Gastrocnemius medialis (tissue), 4 donors: ENCODE measurements at regions of chr3 and their contacts with region 1.

Region 1: DNA sequence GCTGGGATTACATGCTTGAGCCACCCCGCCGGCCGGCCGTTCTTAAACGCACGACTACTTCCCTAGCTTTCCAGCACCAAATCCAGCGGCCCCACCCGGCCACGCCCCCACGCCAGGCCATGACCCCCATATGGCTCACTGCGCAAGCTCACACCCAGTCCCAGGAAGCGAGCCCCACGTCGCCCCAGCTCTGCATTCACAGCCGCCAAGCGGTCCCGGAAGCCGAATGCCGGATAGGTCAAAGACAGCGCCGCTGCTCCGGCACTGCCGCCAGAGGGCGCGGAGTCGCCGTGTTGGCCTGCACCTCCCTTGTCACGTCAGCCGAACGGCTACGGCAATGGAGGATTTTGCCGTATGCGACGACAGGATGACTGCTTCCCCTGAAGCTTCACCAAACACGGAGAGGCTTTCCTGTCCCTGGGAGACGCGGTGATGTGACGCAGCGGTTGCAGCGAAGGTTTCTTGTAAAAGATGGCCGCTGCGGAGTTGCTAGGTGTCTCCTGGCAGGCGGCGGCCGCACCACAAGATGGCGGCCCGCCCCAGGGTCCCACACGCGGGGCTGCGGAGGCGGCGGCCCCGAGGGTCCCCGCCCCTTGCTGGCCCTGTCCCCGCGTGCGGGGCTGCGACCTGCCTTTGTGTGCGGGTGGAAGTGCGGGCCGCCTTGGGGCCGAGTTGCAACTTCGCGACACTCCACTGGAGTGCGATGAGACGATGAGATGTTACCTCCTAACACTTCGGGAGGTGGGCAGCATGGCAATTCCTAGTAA is 30.2 kb upstream of the RPN1 start:
- DNase-seq: peak; percentile 97 to 99
- ATAC-seq: peak; percentile 95
- H3K4me3 ChIP-seq: peak overlapping the region; percentile 67 to 77 (median 70)
- H3K27ac ChIP-seq: peak overlapping the region; percentile 82 to 95 (median 90)
- H3K4me1 ChIP-seq: peaks cover 0 to 8% of the 10 kb centered on the region in 2 donors
- H3K27me3 ChIP-seq: no peaks in the 10 kb centered on the region
- CTCF ChIP-seq: peak; percentile 99 to 100 (median 99)
- POLR2A ChIP-seq: peak; percentile 73 to 85

Region 2: GRCh38 chr3:128617557-128618397 is 63.0 kb before region 1 on chr3:
- in situ Hi-C with region 1: no loop called
- intact Hi-C with region 1: loop called (anchors 2 kb)
- DNase-seq: peak; percentile 95 to 97
- ATAC-seq: peak; percentile 90 to 96
- H3K4me3 ChIP-seq: peak overlapping the region; percentile 73 to 96 (median 84)
- H3K27ac ChIP-seq: peak overlapping the region; percentile 85 to 95 (median 90)
- H3K4me1 ChIP-seq: peaks cover 19 to 20% of the 10 kb centered on the region in 2 donors
- H3K27me3 ChIP-seq: no peaks in the 10 kb centered on the region
- CTCF ChIP-seq: peak; percentile 94 to 99 (median 95)
- POLR2A ChIP-seq: peak in 1 of 2 donors; percentile 39

Region 3: GRCh38 chr3:128650096-128651050 is 30.4 kb before region 1 on chr3 and contains the start of gene RPN1:
- in situ Hi-C with region 1: no loop called
- intact Hi-C with region 1: loop called (anchors 1 kb)
- DNase-seq: peak; percentile 97 to 98
- ATAC-seq: peak; percentile 96
- H3K4me3 ChIP-seq: peak within 1 kb of the TSS; percentile 90 to 100 (median 95)
- H3K27ac ChIP-seq: peak within 1 kb of the TSS; percentile 97 to 100 (median 100)
- H3K4me1 ChIP-seq: peaks cover 16 to 17% of the 10 kb centered on the region in 2 donors
- H3K27me3 ChIP-seq: no peaks in the 10 kb centered on the region
- CTCF ChIP-seq: no peak
- POLR2A ChIP-seq: peak; percentile 77 to 87
- total RNA-seq, gene RPN1: 197 to 219 (median 212) TPM

Region 4: DNA sequence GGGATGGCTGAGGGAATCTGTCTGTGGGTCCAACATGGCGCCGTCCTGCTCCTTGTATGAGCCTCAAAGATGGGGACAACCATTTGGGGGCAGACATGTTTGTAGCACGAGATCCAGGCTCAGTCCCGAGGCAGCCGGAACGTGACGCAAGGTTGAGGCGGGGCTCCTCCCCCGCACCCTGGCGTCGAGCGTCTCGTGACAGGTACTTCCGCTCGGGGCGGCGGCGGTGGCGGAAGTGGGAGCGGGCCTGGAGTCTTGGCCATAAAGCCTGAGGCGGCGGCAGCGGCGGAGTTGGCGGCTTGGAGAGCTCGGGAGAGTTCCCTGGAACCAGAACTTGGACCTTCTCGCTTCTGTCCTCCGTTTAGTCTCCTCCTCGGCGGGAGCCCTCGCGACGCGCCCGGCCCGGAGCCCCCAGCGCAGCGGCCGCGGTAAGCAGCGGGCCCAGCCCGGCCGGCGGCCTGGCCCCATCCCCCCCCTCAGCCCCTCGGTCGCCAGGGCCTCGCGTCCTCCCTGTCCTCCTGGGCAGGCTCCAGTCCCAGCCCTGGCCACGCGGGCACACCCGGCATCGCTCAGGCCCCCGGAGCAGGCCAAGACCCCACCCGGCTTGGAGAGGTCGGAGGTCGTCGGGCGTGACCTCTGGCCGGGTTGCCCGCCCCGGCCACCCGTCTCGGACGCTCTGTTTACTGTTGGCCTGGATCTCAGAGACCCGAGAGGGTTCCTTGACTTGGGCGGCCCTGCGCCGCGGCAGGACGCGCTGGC is 45.3 kb after region 1 on chr3 and contains the start of gene RAB7A:
- in situ Hi-C with region 1: no loop called
- intact Hi-C with region 1: loop called (anchors 1 kb)
- DNase-seq: peak; percentile 98 to 99
- ATAC-seq: peak; percentile 86 to 93
- H3K4me3 ChIP-seq: peak within 1 kb of the TSS; percentile 80 to 99 (median 92)
- H3K27ac ChIP-seq: peak within 1 kb of the TSS; percentile 96 to 99 (median 98)
- H3K4me1 ChIP-seq: peaks cover 39 to 44% of the 10 kb centered on the region in 2 donors
- H3K27me3 ChIP-seq: no peaks in the 10 kb centered on the region
- CTCF ChIP-seq: peak in 3 of 5 experiments; percentile 9 to 27 (median 16)
- POLR2A ChIP-seq: peak; percentile 99
- total RNA-seq, gene RAB7A: 102 to 190 (median 149) TPM

Region 5: DNA sequence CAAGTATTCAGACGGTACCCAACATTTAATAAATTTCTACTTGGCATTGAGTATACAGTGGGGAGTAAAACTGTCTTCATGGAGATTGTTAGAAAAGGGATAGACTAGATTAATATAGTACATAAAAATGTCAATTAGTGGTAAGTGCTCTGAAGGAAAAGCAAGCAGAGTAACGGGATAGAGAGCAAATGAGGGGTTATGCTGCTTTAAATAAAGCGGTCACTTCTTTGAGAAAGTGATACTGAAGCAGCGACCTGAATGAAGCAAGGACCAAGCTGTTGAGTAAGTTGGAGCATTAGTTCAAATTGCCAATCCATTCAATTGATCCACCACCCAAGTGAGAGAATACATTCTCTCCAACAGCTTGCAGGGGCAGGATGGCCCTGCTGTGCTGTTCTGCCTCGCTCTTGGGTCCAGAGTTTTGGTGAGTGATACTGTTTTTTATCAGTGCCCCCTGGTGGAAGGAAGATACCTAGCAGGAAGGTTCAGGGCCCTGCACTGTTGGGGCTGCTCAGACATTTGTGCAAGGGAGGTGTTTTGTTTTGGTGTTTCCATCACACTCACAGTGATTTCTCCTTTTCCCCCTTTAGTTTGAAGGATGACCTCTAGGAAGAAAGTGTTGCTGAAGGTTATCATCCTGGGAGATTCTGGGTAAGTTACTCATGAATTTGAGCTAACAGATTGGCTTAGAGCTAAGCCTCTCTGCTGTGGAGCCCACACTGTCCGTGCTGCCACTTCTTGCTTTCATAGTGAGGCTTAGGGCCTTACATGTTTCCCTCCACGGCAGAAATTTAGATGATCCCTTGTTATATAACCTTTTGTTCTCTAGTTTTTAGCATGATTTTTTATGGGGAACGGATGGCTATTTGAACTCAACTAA is 114.2 kb after region 1 on chr3:
- in situ Hi-C with region 1: loop called in 1 of 4 experiments (anchors 25 kb)
- intact Hi-C with region 1: loop called (anchors 1 kb)
- DNase-seq: peak; percentile 51 to 67
- ATAC-seq: peak; percentile 57 to 68
- H3K4me3 ChIP-seq: no peak overlapping the region
- H3K27ac ChIP-seq: peak overlapping the region; percentile 94 to 99 (median 96)
- H3K4me1 ChIP-seq: peaks cover 41 to 66% of the 10 kb centered on the region in 2 donors
- H3K27me3 ChIP-seq: no peaks in the 10 kb centered on the region
- CTCF ChIP-seq: peak; percentile 75 to 89 (median 85)
- POLR2A ChIP-seq: no peak

Region 6: DNA sequence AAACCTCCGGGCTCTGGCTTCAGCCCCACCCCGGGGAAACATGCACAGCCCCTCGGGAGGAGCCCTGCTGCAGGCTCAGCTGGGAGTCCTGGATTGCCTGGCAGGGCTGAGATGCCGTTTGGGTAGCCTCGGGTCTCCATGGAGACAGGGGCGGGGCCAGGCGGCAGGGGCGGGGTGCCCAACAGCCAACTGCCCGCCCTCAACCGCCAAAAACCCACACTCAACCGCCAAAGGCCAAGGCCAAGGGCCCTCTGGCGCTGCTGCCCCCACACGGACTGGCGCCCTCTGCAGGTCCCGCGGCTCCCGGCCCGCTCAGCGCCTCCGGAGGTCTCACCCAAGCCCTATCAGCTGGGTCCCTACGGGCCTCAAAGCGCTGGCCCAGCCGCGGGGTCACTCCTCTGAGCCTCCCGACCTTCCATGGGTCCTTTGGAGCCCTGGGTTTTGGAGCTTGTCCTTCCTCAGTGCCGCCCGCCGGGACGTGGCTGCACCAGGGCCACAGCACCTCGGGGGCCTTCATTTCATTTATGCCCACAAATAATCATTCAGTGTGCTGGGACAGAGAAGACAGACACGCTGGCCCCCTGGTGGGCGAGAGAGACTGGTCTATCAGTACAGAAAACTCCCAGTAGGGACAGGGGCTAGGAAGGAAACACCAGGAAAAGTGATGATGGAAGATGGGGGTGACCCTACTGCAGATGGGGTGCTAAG is 165.1 kb after region 1 on chr3:
- in situ Hi-C with region 1: loop called in 3 of 4 experiments (anchors 10 to 25 kb)
- intact Hi-C with region 1: loop called (anchors 1 kb)
- DNase-seq: peak; percentile 67 to 86
- ATAC-seq: peak; percentile 67 to 87
- H3K4me3 ChIP-seq: peak overlapping the region; percentile 46 to 70 (median 52)
- H3K27ac ChIP-seq: peak overlapping the region; percentile 78 to 90 (median 84)
- H3K4me1 ChIP-seq: peaks cover 7 to 12% of the 10 kb centered on the region in 2 donors
- H3K27me3 ChIP-seq: no peaks in the 10 kb centered on the region
- CTCF ChIP-seq: peak; percentile 60 to 90 (median 86)
- POLR2A ChIP-seq: no peak

Region 7: DNA sequence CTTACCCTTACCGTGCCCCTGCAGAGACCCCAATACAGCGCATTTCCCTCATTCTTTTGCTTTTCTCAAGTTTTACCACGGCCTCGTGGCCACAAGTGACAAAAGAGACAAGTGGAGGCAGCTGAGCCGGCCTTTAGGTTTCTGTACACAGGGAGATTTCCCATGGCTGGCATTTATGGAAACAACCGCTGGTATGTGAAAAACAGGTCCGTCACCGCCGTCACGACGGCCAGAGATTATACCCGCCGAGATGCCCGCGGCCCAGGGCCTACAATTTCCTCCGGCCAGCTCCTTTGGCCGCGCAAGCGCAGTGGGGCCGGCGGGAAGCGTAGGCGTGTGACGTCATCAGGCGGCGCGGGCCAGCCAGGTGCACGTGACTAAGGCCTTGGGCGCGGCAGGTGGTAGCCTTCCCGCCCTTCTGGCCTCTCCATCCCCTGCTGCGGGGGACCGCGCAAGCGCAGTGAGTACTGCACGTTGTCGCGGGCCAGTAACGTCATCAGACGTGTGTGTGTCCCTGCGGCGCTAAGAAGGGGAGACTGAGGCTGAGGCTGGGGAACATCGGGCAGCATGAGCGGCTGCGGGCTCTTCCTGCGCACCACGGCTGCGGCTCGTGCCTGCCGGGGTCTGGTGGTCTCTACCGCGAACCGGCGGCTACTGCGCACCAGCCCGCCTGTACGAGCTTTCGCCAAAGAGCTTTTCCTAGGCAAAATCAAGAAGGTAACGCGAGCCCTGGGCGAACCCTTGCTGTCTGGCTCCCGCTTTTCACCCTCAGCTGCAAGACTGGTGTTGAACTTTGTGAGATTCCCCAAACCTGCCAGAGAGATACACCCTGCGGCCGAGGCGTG is 198.6 kb after region 1 on chr3 and contains the start of gene ACAD9:
- in situ Hi-C with region 1: loop called in 2 of 4 experiments (anchors 10 to 25 kb)
- intact Hi-C with region 1: loop called (anchors 1 kb)
- DNase-seq: peak; percentile 95 to 98
- ATAC-seq: peak; percentile 85 to 89
- H3K4me3 ChIP-seq: peak within 1 kb of the TSS; percentile 64 to 91 (median 78)
- H3K27ac ChIP-seq: peak within 1 kb of the TSS; percentile 86 to 96 (median 92)
- H3K4me1 ChIP-seq: peaks cover 52 to 60% of the 10 kb centered on the region in 2 donors
- H3K27me3 ChIP-seq: no peaks in the 10 kb centered on the region
- CTCF ChIP-seq: peak in 2 of 5 experiments; percentile 47
- POLR2A ChIP-seq: peak; percentile 95 to 96
- total RNA-seq, gene ACAD9: 26.3 to 43.0 (median 37.5) TPM